Endothelial cell of umbilical vein (primary cell): ENCODE measurements at regions of chr3 and their contacts with region 1.

Region 1: GRCh38 chr3:186971578-186971977 is 41.3 kb downstream of the ST6GAL1 start:
- DNase-seq: peak; percentile 86
- H3K4me3 ChIP-seq: no peak overlapping the region
- H3K27ac ChIP-seq: peak overlapping the region; percentile 56
- H3K4me1 ChIP-seq: peaks cover 28% of the 10 kb centered on the region
- H3K27me3 ChIP-seq: no peaks in the 10 kb centered on the region
- CTCF ChIP-seq: no peak
- POLR2A ChIP-seq: no peak

Region 2: DNA sequence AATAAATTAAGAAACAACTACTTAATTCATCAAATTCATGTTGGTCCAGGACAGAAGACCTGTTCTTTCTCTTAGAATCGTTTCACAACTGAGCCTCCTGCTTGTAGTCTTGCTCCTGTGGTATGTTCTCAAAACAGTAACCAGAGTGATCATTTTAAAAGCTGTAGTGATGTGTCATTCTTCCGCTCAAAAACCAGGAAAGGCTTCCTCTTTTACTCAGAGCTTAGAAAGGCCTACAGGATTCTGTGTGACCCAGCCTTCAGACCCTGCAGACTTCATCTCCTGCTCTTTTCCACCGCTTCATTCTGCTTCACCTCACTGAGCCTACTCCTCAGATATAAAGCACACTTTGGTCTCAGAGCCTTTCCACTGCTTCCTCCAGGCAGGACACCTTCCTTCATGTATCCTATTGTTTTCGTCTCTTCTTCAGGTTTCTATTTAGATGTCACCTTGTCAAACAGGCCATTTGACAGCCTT is 18.5 kb before region 1 on chr3:
- CTCF ChIA-PET with region 1: interaction called, 4 read pairs
- POLR2A ChIA-PET with region 1: no interaction called
- dilution Hi-C with region 1: no loop called
- intact Hi-C with region 1: loop called (anchors 1 kb)
- DNase-seq: peak; percentile 79
- H3K4me3 ChIP-seq: no peak overlapping the region
- H3K27ac ChIP-seq: peak overlapping the region; percentile 26
- H3K4me1 ChIP-seq: peaks cover 18% of the 10 kb centered on the region
- H3K27me3 ChIP-seq: no peaks in the 10 kb centered on the region
- CTCF ChIP-seq: no peak
- POLR2A ChIP-seq: no peak

Region 3: DNA sequence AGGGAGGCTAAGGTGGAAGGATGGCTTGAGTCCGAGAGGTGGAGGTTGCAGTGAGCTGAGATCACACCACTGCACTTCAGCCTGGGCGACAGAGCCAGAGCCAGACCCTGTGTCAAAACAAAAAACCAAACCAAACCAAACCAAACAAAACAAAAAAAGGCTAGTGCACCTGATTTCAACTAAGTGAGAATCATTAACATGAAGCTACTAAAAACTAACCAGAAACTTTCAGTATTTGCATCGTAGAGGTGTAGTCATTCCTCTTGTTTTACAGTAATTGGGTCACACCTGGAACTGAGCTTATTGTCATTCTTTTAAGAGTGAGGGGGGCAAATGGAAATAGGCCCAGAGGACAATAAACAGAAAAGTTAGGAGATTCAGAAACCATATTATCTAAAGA is 17.2 kb after region 1 on chr3:
- CTCF ChIA-PET with region 1: interaction called, 3 read pairs
- POLR2A ChIA-PET with region 1: no interaction called
- dilution Hi-C with region 1: no loop called
- intact Hi-C with region 1: loop called (anchors 2 kb)
- DNase-seq: no peak
- H3K4me3 ChIP-seq: no peak overlapping the region
- H3K27ac ChIP-seq: no peak overlapping the region
- H3K4me1 ChIP-seq: no peaks in the 10 kb centered on the region
- H3K27me3 ChIP-seq: no peaks in the 10 kb centered on the region
- CTCF ChIP-seq: no peak
- POLR2A ChIP-seq: no peak